Dorsolateral prefrontal cortex (tissue), 120 donors: ENCODE measurements at regions of chr4 and their contacts with region 1.

Region 1: GRCh38 chr4:38663801-38664705 is at the start of gene KLF3:
- DNase-seq: peak; percentile 79 to 92 (median 88)
- H3K4me3 ChIP-seq: peak within 1 kb of the TSS; percentile 72 to 96 (median 85)
- H3K27ac ChIP-seq: peak within 1 kb of the TSS; percentile 93 to 100 (median 99)
- H3K27me3 ChIP-seq: no peaks in the 10 kb centered on the region
- CTCF ChIP-seq: peak in 6 of 56 donors; percentile 2 to 14 (median 10)
- total RNA-seq, gene KLF3: 20.0 to 55.9 (median 31.2) TPM

Region 2: DNA sequence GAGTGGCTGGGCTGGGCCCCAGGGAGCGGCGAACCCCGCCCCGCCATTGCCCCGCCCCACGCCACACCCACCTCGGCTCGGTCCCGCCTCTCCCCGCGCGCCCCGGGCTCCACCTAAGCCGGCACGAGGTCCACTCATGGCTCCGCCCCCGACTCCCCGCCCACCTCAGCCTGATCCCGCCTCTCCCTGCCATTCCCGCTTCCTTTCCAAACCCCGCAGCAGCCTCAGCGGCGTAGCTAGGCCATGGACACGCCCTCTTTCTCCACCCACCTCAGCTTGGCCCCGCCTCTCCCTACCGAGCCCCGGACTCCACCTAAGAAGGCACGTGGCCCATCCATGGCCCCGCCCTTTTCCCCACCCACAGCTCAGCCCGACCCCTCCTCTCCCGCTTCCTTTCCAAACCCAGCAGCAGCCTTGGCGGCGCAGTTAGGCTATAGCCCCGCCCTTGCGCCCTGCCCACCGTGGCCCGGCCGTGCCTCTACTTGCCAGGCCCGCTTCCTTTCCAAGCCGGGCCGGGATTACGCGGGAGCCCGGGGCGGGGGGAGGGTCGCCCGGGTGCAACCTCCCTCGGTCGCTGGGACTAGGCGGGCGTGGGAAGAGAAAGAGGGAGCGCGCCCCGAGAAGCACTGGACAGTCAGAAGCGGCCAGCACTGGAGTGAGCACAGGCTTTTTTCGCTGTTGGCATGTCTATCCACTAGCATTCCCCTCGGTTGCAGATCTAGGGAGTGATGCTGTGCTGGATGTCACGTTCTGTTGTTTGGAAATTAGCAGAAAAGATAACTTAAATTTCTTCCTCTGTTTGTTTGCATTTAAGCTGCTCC is 977.5 kb before region 1 on chr4 and contains the start of gene RELL1:
- intact Hi-C with region 1: loop called in 1 of 2 experiments (anchors 5 kb)
- DNase-seq: peak; percentile 98 to 100 (median 99)
- H3K4me3 ChIP-seq: peak within 1 kb of the TSS; percentile 66 to 98 (median 91)
- H3K27ac ChIP-seq: peak within 1 kb of the TSS; percentile 50 to 95 (median 89)
- H3K27me3 ChIP-seq: no peaks in the 10 kb centered on the region
- CTCF ChIP-seq: peak in 14 of 56 donors; percentile 5 to 49 (median 18)
- total RNA-seq, gene RELL1: 9.3 to 58.1 (median 21.9) TPM

Region 3: GRCh38 chr4:38469410-38469809 is 194.6 kb before region 1 on chr4:
- intact Hi-C with region 1: no loop called
- DNase-seq: no peak
- H3K4me3 ChIP-seq: no peak overlapping the region
- H3K27ac ChIP-seq: no peak overlapping the region
- H3K27me3 ChIP-seq: no peaks in the 10 kb centered on the region
- CTCF ChIP-seq: no peak

Region 4: DNA sequence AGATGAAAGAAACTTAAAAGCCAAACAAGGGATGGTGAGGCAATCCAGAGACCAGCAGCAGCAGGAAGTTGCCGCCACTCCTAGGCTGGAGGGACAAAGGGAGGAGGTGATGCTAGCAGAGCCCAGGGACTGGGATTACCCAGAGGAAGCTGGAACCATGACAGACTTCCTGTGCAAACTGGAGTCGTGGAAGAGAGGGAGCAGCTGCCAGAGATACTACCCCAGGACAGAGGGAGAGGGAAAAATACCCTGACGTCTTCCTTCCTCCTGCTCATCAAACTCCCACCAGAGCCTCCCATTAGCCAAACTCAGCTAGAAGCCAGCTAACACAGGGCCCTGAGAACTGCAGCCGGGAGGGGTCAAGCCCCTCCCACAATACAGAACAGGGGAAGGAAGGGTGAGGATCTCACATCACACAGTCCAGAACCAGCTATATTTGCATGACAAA is 101.3 kb before region 1 on chr4:
- intact Hi-C with region 1: loop called (anchors 5 kb)
- DNase-seq: no peak
- H3K4me3 ChIP-seq: no peak overlapping the region
- H3K27ac ChIP-seq: peak overlapping the region in 14 of 59 donors; percentile 3 to 89 (median 24)
- H3K27me3 ChIP-seq: no peaks in the 10 kb centered on the region
- CTCF ChIP-seq: no peak

Region 5: DNA sequence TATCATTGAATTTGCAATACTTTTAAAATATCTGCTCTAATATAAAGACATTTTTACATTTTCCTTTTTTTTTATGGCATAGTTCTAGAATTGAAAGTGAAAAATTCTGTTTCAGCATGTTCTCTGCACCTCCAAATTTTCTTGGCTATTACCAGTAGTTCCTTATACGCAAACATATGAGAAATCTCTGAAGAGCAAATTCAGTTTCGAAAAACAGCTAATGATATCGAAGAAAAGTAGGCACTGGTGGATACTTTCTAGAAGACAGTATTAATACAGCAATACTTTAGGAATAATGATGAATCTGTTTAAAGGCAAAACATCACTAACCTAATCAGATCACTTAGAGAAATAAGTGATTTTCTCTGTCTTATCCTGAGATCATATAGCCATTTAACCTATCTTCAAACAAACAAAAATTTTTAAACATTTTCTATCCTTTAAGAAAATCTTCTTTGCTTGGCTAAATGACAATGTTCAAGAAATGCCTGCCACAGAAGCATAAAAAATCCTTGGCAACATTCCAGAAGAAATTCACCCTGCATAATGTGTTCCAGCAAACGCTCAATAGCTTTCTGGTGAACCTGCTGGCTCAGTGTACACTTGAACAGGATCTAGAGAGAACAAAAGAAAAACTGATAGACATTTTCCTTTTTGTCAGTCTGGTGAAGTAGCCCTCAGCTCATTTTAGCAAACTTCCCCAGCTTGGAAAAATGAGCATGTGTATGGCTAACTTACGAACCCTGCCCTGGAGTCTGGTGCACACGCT is 51.2 kb before region 1 on chr4:
- intact Hi-C with region 1: loop called in 1 of 2 experiments (anchors 5 kb)
- DNase-seq: no peak
- H3K4me3 ChIP-seq: peak overlapping the region in 1 of 59 donors; percentile 10
- H3K27ac ChIP-seq: peak overlapping the region in 9 of 59 donors; percentile 3 to 48 (median 29)
- H3K27me3 ChIP-seq: no peaks in the 10 kb centered on the region
- CTCF ChIP-seq: no peak

Region 6: GRCh38 chr4:38620790-38621684 is 43.0 kb before region 1 on chr4:
- intact Hi-C with region 1: loop called in 1 of 2 experiments (anchors 5 kb)
- DNase-seq: no peak
- H3K4me3 ChIP-seq: no peak overlapping the region
- H3K27ac ChIP-seq: no peak overlapping the region
- H3K27me3 ChIP-seq: no peaks in the 10 kb centered on the region
- CTCF ChIP-seq: no peak